CD4-positive, alpha-beta memory T cell (primary cell): ENCODE measurements at regions of chr22 and their contacts with region 1.

Region 1: GRCh38 chr22:43036282-43036829 is 21.4 kb upstream of the PACSIN2 start:
- DNase-seq: no peak
- H3K4me3 ChIP-seq: no peak overlapping the region
- H3K4me3 Mint-ChIP-seq: no peak overlapping the region
- H3K27ac ChIP-seq: no peak overlapping the region
- H3K27ac Mint-ChIP-seq: no peak overlapping the region
- H3K4me1 ChIP-seq: no peaks in the 10 kb centered on the region
- H3K4me1 Mint-ChIP-seq: peaks cover 0 to 6% (median 5%) of the 10 kb centered on the region in 4 donors
- H3K27me3 ChIP-seq: no peaks in the 10 kb centered on the region
- H3K27me3 Mint-ChIP-seq: no peaks in the 10 kb centered on the region

Region 2: DNA sequence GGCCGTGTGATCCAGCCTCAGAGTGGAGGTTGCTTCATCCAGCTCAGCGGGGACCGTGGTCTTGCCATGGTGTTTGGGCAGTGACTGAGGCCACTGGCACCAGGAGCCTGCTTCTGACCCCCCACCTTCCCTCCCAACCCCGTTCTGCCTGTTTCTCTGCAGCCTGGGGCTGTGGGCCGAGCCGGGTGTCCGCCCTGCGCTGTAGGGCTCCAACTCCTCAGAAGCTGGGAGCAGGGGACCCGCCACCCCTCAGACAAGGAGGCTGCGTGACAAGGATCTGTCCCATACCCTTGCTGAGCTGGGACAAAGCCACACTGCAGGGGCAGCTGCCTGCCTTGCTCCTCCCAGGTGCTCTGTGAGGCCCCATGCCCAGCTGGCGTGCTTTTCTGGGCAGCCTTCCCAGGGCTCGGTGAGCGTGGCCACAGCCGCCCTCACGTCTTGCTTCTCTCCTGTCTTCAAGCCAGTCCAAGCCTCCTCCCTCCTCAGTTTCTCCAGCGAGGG is 167.6 kb before region 1 on chr22:
- CTCF ChIA-PET with region 1: interaction called, 18 read pairs
- POLR2A ChIA-PET with region 1: no interaction called
- intact Hi-C with region 1: loop called (anchors 5 kb)
- DNase-seq: no peak
- H3K4me3 ChIP-seq: no peak overlapping the region
- H3K4me3 Mint-ChIP-seq: no peak overlapping the region
- H3K27ac ChIP-seq: no peak overlapping the region
- H3K27ac Mint-ChIP-seq: no peak overlapping the region
- H3K4me1 ChIP-seq: no peaks in the 10 kb centered on the region
- H3K4me1 Mint-ChIP-seq: peaks cover under 1 to 3% (median under 1%) of the 10 kb centered on the region in 4 donors
- H3K27me3 ChIP-seq: no peaks in the 10 kb centered on the region
- H3K27me3 Mint-ChIP-seq: no peaks in the 10 kb centered on the region

Region 3: GRCh38 chr22:42920101-42920820 is 116.1 kb before region 1 on chr22:
- CTCF ChIA-PET with region 1: interaction called, 10 read pairs
- POLR2A ChIA-PET with region 1: no interaction called
- intact Hi-C with region 1: no loop called
- DNase-seq: no peak
- H3K4me3 ChIP-seq: no peak overlapping the region
- H3K4me3 Mint-ChIP-seq: no peak overlapping the region
- H3K27ac ChIP-seq: no peak overlapping the region
- H3K27ac Mint-ChIP-seq: peak overlapping the region in 1 of 7 donors; percentile 48
- H3K4me1 ChIP-seq: no peaks in the 10 kb centered on the region
- H3K4me1 Mint-ChIP-seq: peaks cover 20 to 46% (median 31%) of the 10 kb centered on the region in 4 donors
- H3K27me3 ChIP-seq: no peaks in the 10 kb centered on the region
- H3K27me3 Mint-ChIP-seq: no peaks in the 10 kb centered on the region

Region 4: DNA sequence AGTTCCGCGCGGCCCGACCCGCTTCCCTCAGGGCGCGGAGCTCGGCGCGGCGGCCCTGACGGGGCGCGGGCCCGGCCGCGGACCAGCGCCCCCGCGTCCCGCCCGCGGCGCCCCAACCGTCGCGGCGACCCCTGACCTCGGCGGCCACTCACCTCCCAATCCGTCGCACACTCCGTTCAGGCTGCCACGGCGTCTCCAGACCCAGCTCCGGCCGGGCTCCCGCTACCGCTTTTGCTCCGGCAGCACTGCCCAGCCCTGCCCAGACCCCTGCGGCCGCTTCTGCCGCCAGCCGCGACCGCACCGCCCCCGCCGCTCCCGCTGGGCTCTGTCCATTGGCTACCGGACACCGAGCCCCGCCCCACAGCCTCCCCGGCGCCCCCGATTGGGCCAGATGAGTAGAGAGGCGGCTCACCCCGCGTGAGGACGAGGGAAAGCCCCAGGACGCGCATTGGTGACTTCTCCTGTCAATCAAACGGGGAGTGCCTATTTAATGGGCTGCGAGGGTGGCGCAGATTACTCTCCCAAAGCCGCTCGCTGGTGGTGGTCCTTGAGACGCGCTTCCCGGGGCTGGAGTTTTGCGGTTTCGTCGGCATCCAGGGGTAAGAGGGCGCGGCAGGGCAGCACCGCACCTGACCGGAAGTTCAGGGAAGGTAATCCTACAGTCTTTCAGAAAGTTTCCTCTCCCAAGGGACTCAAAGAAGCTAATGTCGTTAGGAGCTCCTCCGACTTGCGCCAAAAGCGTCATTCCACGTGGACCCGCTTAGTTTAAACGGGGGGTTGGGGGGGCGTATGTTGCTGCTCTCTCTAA is 21.3 kb before region 1 on chr22 and contains the start of gene PACSIN2:
- CTCF ChIA-PET with region 1: interaction called, 11 read pairs
- POLR2A ChIA-PET with region 1: interaction called, 8 read pairs
- intact Hi-C with region 1: no loop called
- DNase-seq: peak; percentile 97 to 99 (median 97)
- H3K4me3 ChIP-seq: peak within 1 kb of the TSS; percentile 74 to 76
- H3K4me3 Mint-ChIP-seq: peak within 1 kb of the TSS; percentile 97 to 99 (median 98)
- H3K27ac ChIP-seq: peak within 1 kb of the TSS; percentile 79
- H3K27ac Mint-ChIP-seq: peak within 1 kb of the TSS; percentile 92 to 99 (median 97)
- H3K4me1 ChIP-seq: peaks cover 27% of the 10 kb centered on the region
- H3K4me1 Mint-ChIP-seq: peaks cover 22 to 59% (median 37%) of the 10 kb centered on the region in 4 donors
- H3K27me3 ChIP-seq: no peaks in the 10 kb centered on the region
- H3K27me3 Mint-ChIP-seq: no peaks in the 10 kb centered on the region
- total RNA-seq, gene PACSIN2: 54.5 to 55.0 TPM